Activated CD4-positive, alpha-beta memory T cell treated with anti-CD3 and anti-CD28 coated beads, Interleukin-2, amount 10 ng/mL, durations not matched to agents 7 days and 5 days (primary cell): ENCODE measurements at regions of chr1 and their contacts with region 1.

Region 1: GRCh38 chr1:52424231-52424636 is 19.8 kb downstream of the PRPF38A start:
- DNase-seq: peak; percentile 41
- H3K4me3 Mint-ChIP-seq: peak overlapping the region; percentile 59
- H3K27ac Mint-ChIP-seq: peak overlapping the region; percentile 97
- H3K4me1 Mint-ChIP-seq: peaks cover 43% of the 10 kb centered on the region
- H3K27me3 Mint-ChIP-seq: no peaks in the 10 kb centered on the region

Region 2: GRCh38 chr1:52345252-52345651 is 79.0 kb before region 1 on chr1:
- CTCF ChIA-PET with region 1: no interaction called
- POLR2A ChIA-PET with region 1: no interaction called
- DNase-seq: no peak
- H3K4me3 Mint-ChIP-seq: no peak overlapping the region
- H3K27ac Mint-ChIP-seq: no peak overlapping the region
- H3K4me1 Mint-ChIP-seq: no peaks in the 10 kb centered on the region
- H3K27me3 Mint-ChIP-seq: no peaks in the 10 kb centered on the region

Region 3: DNA sequence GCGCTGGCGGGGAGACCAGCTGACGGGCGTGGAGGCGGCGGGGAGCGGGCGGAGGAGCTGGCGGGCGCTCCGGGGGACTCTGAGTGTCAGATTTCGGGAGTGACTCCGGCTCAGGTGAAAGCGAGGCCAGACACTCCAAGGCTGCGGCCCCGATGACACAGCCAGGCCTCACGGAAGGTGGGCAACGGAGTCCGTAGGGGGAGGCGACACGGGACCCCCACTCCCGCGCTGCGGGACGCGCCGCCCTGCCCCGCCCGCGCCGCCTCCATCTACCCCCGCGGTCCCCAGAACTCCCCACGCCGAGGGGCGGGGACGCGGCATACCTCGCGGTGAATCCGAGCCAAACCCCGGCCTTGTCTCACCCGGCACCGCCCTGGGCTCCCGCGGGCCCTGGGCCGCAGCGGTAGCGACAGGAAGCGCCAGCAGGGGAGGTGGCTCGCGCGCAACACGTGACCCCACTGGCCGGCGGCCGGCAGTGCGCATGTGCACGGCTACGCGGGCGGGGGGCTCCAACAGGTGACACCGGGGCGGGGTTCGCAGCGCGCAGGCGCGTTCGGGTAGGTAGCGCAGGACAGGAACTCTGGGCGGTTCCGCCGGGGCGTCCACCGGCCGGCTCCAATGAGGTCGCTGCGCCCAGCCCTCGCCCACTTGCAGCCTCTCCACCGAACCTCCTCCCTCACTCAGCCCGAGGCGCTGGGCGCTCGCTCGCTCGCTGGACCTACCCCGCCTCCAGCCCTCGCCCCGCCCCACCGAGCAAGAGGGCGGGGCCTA is 58.3 kb before region 1 on chr1 and contains the start of gene CC2D1B:
- CTCF ChIA-PET with region 1: interaction called, 3 read pairs
- POLR2A ChIA-PET with region 1: interaction called, 12 read pairs
- DNase-seq: peak; percentile 100
- H3K4me3 Mint-ChIP-seq: peak within 1 kb of the TSS; percentile 97
- H3K27ac Mint-ChIP-seq: peak within 1 kb of the TSS; percentile 96
- H3K4me1 Mint-ChIP-seq: peaks cover 46% of the 10 kb centered on the region
- H3K27me3 Mint-ChIP-seq: no peaks in the 10 kb centered on the region
- total RNA-seq, gene CC2D1B: 43.8 to 46.9 TPM

Region 4: DNA sequence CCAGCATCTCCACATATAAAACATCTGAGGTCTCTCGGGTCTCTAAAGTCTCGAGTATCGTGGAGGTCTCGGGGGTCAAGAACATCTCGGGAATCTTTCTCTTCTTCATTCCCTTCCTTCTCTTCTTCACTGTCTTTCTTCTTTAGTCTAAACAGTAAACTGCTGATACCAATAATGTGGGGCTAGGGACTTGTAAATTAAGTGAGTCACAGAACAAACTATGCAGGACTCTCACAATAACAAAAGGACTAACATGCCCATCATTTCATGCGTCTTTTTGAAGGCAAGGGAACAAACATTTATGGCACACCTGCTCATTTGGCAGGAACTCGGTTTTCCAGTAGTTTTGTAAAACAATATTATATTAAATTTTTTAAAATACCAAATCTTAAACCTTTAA is 12.6 kb after region 1 on chr1:
- CTCF ChIA-PET with region 1: no interaction called
- POLR2A ChIA-PET with region 1: interaction called, 12 read pairs
- DNase-seq: no peak
- H3K4me3 Mint-ChIP-seq: no peak overlapping the region
- H3K27ac Mint-ChIP-seq: no peak overlapping the region
- H3K4me1 Mint-ChIP-seq: peaks cover 1% of the 10 kb centered on the region
- H3K27me3 Mint-ChIP-seq: no peaks in the 10 kb centered on the region

Region 5: DNA sequence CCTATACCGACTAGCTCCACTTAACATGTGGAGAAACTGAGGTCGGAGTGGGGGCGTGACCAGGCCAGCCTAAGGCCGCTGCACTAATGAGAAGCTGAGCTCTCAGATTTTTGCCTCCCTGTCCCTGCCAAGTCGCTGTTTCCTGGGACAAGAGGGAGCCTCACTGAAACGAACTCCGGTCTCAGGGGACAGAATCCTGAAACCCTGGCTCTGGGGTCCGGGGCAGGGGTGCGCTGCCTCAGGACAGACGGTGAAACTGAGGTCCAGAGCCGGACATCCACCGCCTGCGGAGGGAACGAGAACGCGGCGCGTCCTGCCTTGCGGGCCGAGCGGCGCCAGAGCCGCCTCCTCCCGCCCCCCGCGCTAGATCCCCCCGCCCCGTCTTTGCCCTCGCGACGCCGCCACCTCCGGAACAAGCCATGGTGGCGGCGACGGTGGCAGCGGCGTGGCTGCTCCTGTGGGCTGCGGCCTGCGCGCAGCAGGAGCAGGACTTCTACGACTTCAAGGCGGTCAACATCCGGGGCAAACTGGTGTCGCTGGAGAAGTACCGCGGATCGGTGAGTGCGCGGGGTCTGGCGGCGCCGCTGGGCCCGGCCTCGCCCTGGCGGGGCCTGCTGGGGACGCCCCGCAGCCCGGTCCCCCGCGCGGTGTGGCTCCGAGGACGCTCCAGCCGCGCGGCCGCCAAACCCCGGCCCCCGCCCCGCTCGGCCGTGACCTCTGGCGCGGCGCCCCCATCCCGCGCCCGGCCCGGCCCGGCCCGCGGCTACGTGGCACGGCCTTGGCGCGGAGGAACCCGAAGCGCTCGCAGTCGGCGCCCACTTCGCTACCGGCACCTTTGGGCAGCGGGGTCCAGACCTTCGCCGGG is 178.0 kb after region 1 on chr1 and contains the start of gene GPX7:
- CTCF ChIA-PET with region 1: no interaction called
- POLR2A ChIA-PET with region 1: interaction called, 10 read pairs
- DNase-seq: peak; percentile 68
- H3K4me3 Mint-ChIP-seq: peak within 1 kb of the TSS; percentile 86
- H3K27ac Mint-ChIP-seq: peak within 1 kb of the TSS; percentile 85
- H3K4me1 Mint-ChIP-seq: peaks cover 35% of the 10 kb centered on the region
- H3K27me3 Mint-ChIP-seq: no peaks in the 10 kb centered on the region
- total RNA-seq, gene GPX7: 21.2 to 23.5 TPM

Region 6: DNA sequence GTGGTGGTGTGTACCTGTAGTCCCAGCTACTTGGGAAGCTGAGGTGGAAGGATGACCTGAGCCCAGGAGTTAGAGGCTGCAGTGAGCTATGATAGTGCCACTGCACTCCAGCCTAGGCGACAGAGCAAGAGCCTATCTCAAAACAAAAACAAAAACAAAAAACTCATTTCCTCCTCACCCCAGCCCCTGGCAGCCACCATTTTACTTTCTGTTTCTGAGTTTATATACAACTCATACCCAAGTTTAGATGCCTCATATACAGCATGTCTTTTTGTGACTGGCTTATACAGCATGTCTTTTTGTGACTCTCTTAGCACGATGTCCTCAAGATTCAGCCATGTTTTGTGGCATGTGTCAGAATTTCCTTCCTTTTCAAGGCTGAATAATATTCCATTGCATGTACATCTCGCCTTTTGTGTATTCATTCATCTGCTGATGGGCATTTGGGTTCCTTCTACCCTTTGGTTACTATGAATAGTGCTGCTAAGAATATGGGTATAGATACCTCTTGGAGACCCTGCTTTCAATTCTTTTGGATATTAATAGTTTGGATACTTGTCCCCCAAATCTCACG is 259.2 kb after region 1 on chr1:
- CTCF ChIA-PET with region 1: interaction called, 17 read pairs
- POLR2A ChIA-PET with region 1: interaction called, 3 read pairs
- DNase-seq: no peak
- H3K4me3 Mint-ChIP-seq: no peak overlapping the region
- H3K27ac Mint-ChIP-seq: peak overlapping the region; percentile 0
- H3K4me1 Mint-ChIP-seq: peaks cover 16% of the 10 kb centered on the region
- H3K27me3 Mint-ChIP-seq: no peaks in the 10 kb centered on the region